WTC11 (cell line): ENCODE measurements at regions of chr12 and their contacts with region 1.

Region 1: DNA sequence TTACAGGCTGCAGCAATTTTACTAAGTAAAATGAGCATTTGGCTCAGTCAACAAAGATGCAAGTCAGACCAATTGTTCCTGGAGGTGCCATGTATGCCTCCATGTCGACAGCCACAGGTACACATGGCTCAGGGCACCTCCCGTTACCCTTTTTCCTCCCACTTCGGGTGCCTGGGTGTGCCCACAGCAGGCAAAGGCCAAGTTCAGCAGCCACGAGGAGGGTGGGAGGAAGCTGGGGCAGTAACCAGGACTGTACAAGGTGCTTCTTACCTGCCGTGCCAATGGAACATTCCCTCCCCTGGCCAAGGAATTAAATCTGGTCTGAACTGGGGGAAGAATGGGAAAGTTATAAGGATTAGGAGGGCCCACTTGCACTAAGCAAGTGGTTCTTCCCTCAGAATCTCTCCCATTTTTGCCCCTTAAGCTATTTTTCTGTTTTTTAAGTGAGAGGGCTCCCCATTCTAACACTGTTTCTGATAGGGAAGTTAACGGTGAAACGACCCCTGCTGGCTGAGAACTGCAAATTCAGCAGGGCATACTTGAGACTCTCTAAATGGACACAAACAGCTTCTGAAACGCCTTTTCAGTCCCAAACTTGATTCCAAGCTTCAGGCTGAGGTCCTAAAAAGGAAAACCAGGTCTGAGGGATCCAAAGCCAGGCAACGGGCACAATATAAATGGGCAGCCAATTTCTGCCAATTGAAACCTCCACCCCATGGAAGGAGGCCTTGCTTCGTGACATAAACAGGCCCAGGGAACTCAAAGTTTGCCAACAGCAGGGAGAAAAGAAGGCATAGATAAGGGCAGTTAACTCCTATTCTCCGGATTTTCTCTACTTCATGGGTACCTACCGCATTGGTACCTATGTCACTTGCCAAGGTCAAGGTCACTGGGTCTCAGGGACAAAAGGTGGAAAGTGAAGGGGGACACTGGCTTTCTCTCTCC is 24.8 kb downstream of the CLECL1 start:
- DNase-seq: peak; percentile 60
- ATAC-seq: peak; percentile 86
- H3K4me3 Mint-ChIP-seq: no peak overlapping the region
- H3K27ac Mint-ChIP-seq: no peak overlapping the region
- H3K4me1 Mint-ChIP-seq: peaks cover 22% of the 10 kb centered on the region
- H3K27me3 Mint-ChIP-seq: no peaks in the 10 kb centered on the region
- CTCF ChIP-seq: peak; percentile 63

Region 2: DNA sequence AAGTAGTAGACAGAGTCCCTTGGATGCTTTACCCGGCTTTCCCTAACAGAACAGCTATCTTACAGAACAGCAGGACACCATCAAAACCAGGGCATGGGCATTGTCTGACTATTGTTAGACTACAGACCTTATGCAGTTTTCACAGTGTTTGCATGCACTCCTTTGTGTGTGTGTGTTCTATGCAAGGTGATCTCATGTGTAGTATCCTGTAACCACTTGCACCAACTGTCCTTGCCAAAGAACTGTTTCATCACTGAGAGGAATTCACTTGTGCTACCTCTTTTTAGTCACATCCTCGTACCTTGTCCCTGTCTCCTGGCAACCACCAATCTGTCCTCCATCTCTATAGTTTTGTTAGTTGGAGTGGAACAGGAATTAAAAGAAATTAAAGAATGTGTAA is 316.3 kb before region 1 on chr12:
- CTCF ChIA-PET with region 1: no interaction called
- POLR2A ChIA-PET with region 1: no interaction called
- DNase-seq: no peak
- ATAC-seq: peak; percentile 65
- H3K4me3 Mint-ChIP-seq: no peak overlapping the region
- H3K27ac Mint-ChIP-seq: peak overlapping the region; percentile 6; the same call in 1 of the 2 replicates
- H3K4me1 Mint-ChIP-seq: peaks cover 21% of the 10 kb centered on the region
- H3K27me3 Mint-ChIP-seq: no peaks in the 10 kb centered on the region
- CTCF ChIP-seq: no peak

Region 3: GRCh38 chr12:9647825-9648700 is 60.1 kb before region 1 on chr12:
- CTCF ChIA-PET with region 1: interaction called, 15 read pairs
- POLR2A ChIA-PET with region 1: no interaction called
- DNase-seq: peak; percentile 78
- ATAC-seq: peak; percentile 92
- H3K4me3 Mint-ChIP-seq: peak overlapping the region; percentile 90
- H3K27ac Mint-ChIP-seq: peak overlapping the region; percentile 94
- H3K4me1 Mint-ChIP-seq: peaks cover 42% of the 10 kb centered on the region
- H3K27me3 Mint-ChIP-seq: peaks cover 4% of the 10 kb centered on the region; the same call in 1 of the 2 replicates
- CTCF ChIP-seq: no peak

Region 4: DNA sequence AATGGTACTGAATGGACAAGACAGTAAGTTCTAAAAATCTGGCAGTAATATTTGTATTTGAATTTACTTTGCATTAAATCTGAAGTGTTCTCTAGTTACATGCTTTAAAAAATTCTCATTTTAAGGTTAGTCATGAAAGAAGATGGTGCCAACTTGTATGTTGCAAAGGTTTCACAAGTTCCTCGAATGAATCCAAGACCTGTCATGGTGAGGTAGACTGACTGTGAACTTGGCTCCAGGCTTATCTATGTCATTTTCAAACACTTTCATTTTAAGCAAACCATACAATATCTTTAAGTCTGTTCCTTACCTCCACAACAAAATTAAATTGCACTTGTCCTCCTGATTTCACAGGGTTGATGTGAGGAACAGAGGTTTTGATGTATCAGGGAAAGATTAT is 15.2 kb before region 1 on chr12:
- CTCF ChIA-PET with region 1: no interaction called
- POLR2A ChIA-PET with region 1: no interaction called
- DNase-seq: no peak
- ATAC-seq: no peak
- H3K4me3 Mint-ChIP-seq: no peak overlapping the region
- H3K27ac Mint-ChIP-seq: no peak overlapping the region
- H3K4me1 Mint-ChIP-seq: no peaks in the 10 kb centered on the region
- H3K27me3 Mint-ChIP-seq: no peaks in the 10 kb centered on the region
- CTCF ChIP-seq: no peak

Region 5: GRCh38 chr12:10031771-10032175 is 323.6 kb after region 1 on chr12:
- CTCF ChIA-PET with region 1: no interaction called
- POLR2A ChIA-PET with region 1: no interaction called
- DNase-seq: no peak
- ATAC-seq: peak; percentile 94
- H3K4me3 Mint-ChIP-seq: no peak overlapping the region
- H3K27ac Mint-ChIP-seq: peak overlapping the region; percentile 85
- H3K4me1 Mint-ChIP-seq: peaks cover 16% of the 10 kb centered on the region
- H3K27me3 Mint-ChIP-seq: no peaks in the 10 kb centered on the region
- CTCF ChIP-seq: no peak